Body of pancreas (tissue), 4 donors: ENCODE measurements at regions of chr12 and their contacts with region 1.

Region 1: GRCh38 chr12:39095636-39096330 is 190.4 kb upstream of the CPNE8 start:
- DNase-seq: no peak
- ATAC-seq: no peak
- H3K4me3 ChIP-seq: no peak overlapping the region
- H3K27ac ChIP-seq: no peak overlapping the region
- H3K4me1 ChIP-seq: no peaks in the 10 kb centered on the region
- H3K27me3 ChIP-seq: no peaks in the 10 kb centered on the region
- CTCF ChIP-seq: no peak
- POLR2A ChIP-seq: no peak

Region 2: GRCh38 chr12:38332814-38333213 is 763.0 kb before region 1 on chr12:
- intact Hi-C with region 1: loop called (anchors 10 kb)
- DNase-seq: no peak
- ATAC-seq: no peak
- H3K4me3 ChIP-seq: no peak overlapping the region
- H3K27ac ChIP-seq: no peak overlapping the region
- H3K4me1 ChIP-seq: no peaks in the 10 kb centered on the region
- H3K27me3 ChIP-seq: no peaks in the 10 kb centered on the region
- CTCF ChIP-seq: no peak
- POLR2A ChIP-seq: no peak

Region 3: DNA sequence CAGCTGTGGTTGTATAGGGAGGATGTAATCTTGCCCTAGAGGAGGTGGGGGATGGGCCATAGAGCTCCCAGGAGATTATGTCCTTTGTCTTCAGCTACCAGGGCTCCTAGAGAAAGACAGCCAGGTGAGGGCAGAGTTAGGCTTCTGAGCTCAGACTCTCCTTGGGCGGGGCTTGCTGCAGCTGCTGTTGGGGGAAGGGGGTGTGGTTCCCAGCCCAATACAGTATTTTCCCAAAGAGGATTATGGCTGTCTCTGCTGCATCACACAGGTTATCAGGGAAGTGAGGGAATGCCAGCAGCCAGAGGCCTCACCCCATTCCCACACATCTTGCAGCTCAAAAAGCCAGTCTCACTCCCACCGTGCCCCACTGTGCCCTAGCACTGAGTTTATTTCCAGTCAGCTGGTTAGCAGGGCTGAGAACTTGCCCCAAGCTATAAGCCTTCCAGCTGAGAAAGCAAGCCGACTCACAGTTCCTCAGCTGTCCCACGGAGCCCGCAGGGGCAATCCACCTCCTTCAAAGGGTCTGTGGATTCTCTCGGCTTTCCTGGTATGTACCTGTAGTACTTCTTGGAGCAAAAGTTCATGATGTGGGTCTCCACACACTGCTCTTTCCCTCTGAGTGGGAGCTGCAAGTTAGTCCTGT is 26.9 kb after region 1 on chr12:
- intact Hi-C with region 1: loop called (anchors 2 kb)
- DNase-seq: no peak
- ATAC-seq: no peak
- H3K4me3 ChIP-seq: no peak overlapping the region
- H3K27ac ChIP-seq: no peak overlapping the region
- H3K4me1 ChIP-seq: no peaks in the 10 kb centered on the region
- H3K27me3 ChIP-seq: no peaks in the 10 kb centered on the region
- CTCF ChIP-seq: no peak
- POLR2A ChIP-seq: no peak